Psoas muscle (tissue), 8 donors: ENCODE measurements at regions of chr13 and their contacts with region 1.

Region 1: GRCh38 chr13:22517544-22517943 is 663.2 kb upstream of the SGCG start:
- DNase-seq: no peak
- ATAC-seq: no peak
- H3K4me3 ChIP-seq: no peak overlapping the region
- H3K27ac ChIP-seq: no peak overlapping the region
- H3K4me1 ChIP-seq: no peaks in the 10 kb centered on the region
- H3K27me3 ChIP-seq: no peaks in the 10 kb centered on the region
- CTCF ChIP-seq: no peak

Region 2: DNA sequence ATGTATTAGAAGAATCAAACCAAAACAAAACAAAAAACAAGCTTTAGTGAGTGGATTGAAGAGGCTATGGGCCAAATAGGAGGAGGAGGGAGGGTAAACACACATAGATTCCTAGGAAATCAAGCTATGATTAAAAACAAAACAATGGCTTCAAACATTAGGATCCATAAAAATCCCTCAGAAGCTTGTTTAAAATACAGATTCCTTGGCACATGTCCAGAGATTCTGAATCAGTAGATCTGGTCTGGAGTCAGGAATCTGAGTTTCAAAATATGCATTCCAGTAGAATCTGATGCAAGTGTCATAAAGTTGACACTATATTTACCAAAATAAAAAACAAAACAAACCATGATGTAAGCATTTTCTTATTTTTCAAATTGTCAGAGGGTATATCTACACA is 29.6 kb before region 1 on chr13:
- intact Hi-C with region 1: loop called in 1 of 2 experiments (anchors 2 kb)
- DNase-seq: no peak
- ATAC-seq: no peak
- H3K4me3 ChIP-seq: no peak overlapping the region
- H3K27ac ChIP-seq: no peak overlapping the region
- H3K4me1 ChIP-seq: no peaks in the 10 kb centered on the region
- H3K27me3 ChIP-seq: no peaks in the 10 kb centered on the region
- CTCF ChIP-seq: no peak